ENCODE measurements at regions of chr1 and their contacts with region 1.

Region 1: DNA sequence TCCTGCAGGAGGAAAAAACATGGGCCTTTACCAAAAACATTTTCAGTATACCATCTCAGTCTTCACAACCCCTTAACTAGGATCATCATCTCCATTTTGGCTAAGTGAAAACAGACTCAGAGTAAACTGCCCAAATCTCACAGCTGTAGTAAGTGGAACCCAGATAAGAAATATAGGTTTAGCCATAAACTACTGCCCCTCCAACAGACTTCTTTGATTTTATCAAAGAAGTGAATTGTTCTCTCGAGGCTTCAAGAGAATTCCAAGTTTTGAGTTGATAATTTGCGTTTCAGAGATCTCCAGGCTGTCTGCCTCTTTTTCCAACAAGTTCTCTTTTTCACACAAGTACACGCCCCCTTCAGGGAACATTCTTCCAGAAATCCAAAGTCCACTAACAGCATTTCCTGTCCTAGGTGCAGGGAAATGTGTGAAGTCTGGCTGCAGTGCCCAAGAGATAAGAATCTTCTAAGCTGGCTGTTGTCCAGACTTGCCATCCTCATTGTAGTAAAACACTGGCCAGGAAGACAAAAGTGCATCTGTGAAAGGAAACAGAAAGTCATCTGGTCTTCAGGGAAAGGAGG is 30.8 kb downstream of the RNF19B start:
- DNase-seq: no peak
- ATAC-seq: no peak
- H3K4me3 Mint-ChIP-seq: no peak overlapping the region
- H3K27ac Mint-ChIP-seq: no peak overlapping the region
- H3K4me1 Mint-ChIP-seq: peaks cover 12% of the 10 kb centered on the region
- H3K27me3 Mint-ChIP-seq: no peaks in the 10 kb centered on the region

Region 2: DNA sequence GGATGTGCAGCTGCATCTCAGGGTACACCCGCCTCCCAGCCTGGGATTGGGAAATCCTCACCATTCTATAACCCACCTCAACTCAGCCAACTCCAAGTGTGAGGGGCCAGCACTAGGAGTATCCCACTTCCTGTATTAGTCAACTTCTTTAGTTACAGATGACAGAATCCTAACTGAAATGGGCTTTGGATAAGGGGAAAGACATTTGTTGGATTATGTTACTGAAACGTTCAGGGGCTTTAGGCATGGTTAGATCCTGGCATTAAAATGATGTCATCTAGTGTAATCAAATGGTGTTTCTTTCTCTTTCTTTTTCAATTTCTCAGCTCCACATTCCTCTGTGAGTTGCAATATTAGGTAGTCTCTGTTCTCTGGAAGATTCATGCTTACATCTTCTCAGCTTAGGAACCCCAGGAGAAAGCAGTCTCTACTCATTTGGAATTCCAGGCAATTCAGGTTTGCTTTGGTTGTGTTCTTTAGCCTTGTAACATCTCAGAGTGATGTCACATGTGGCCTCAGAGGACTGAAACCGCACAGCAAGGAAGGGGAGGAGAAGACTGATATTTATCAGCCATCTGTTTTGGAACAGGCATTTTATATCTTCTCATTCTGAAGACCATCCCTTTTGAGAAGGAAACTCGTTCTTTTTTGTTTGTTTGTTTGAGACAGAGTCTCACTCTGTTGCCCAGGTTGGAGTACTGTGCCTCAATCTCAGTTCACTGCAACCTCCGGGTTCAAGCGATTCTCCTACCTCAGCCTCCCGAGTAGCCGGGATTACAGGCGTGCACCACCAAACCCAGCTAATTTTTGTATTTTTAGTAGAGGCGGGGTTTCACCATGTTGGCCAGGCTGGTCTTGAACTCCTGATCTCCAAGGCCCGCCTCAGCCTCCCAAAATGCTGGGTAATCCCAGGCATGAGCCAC is 13.8 kb before region 1 on chr1:
- CTCF ChIA-PET with region 1: interaction called, 10 read pairs
- POLR2A ChIA-PET with region 1: no interaction called
- intact Hi-C with region 1: no loop called
- DNase-seq: no peak
- ATAC-seq: peak; percentile 36
- H3K4me3 Mint-ChIP-seq: no peak overlapping the region
- H3K27ac Mint-ChIP-seq: peak overlapping the region; percentile 20
- H3K4me1 Mint-ChIP-seq: peaks cover 13% of the 10 kb centered on the region
- H3K27me3 Mint-ChIP-seq: peaks cover 40% of the 10 kb centered on the region

Region 3: GRCh38 chr1:32958827-32959226 is 25.0 kb after region 1 on chr1:
- CTCF ChIA-PET with region 1: interaction called, 11 read pairs
- POLR2A ChIA-PET with region 1: no interaction called
- intact Hi-C with region 1: no loop called
- DNase-seq: no peak
- ATAC-seq: no peak
- H3K4me3 Mint-ChIP-seq: no peak overlapping the region
- H3K27ac Mint-ChIP-seq: peak overlapping the region; percentile 42
- H3K4me1 Mint-ChIP-seq: peaks cover 57% of the 10 kb centered on the region
- H3K27me3 Mint-ChIP-seq: no peaks in the 10 kb centered on the region

Region 4: GRCh38 chr1:33007190-33008050 is 73.6 kb after region 1 on chr1:
- CTCF ChIA-PET with region 1: interaction called, 10 read pairs
- POLR2A ChIA-PET with region 1: interaction called, 3 read pairs
- intact Hi-C with region 1: loop called (anchors 1 to 5 kb)
- DNase-seq: peak; percentile 29
- ATAC-seq: peak; percentile 23
- H3K4me3 Mint-ChIP-seq: no peak overlapping the region
- H3K27ac Mint-ChIP-seq: no peak overlapping the region
- H3K4me1 Mint-ChIP-seq: peaks cover 15% of the 10 kb centered on the region
- H3K27me3 Mint-ChIP-seq: no peaks in the 10 kb centered on the region

Region 5: GRCh38 chr1:33055210-33056008 is 121.6 kb after region 1 on chr1:
- CTCF ChIA-PET with region 1: interaction called, 68 read pairs
- POLR2A ChIA-PET with region 1: no interaction called
- intact Hi-C with region 1: loop called (anchors 1 kb)
- DNase-seq: peak; percentile 45
- ATAC-seq: peak; percentile 77
- H3K4me3 Mint-ChIP-seq: no peak overlapping the region
- H3K27ac Mint-ChIP-seq: no peak overlapping the region
- H3K4me1 Mint-ChIP-seq: peaks cover 5% of the 10 kb centered on the region
- H3K27me3 Mint-ChIP-seq: peaks cover 5% of the 10 kb centered on the region

Region 6: GRCh38 chr1:33086384-33086850 is 152.6 kb after region 1 on chr1:
- CTCF ChIA-PET with region 1: interaction called, 53 read pairs
- POLR2A ChIA-PET with region 1: no interaction called
- intact Hi-C with region 1: loop called (anchors 1 to 10 kb)
- DNase-seq: peak; percentile 73
- ATAC-seq: peak; percentile 65
- H3K4me3 Mint-ChIP-seq: no peak overlapping the region
- H3K27ac Mint-ChIP-seq: no peak overlapping the region
- H3K4me1 Mint-ChIP-seq: peaks cover 23% of the 10 kb centered on the region
- H3K27me3 Mint-ChIP-seq: peaks cover 3% of the 10 kb centered on the region

Measured in activated CD4-positive, alpha-beta T cell treated with anti-CD3 and anti-CD28 coated beads for 36 hours (primary cell).